ENCODE measurements at regions of chr7 and their contacts with region 1.

Region 1: DNA sequence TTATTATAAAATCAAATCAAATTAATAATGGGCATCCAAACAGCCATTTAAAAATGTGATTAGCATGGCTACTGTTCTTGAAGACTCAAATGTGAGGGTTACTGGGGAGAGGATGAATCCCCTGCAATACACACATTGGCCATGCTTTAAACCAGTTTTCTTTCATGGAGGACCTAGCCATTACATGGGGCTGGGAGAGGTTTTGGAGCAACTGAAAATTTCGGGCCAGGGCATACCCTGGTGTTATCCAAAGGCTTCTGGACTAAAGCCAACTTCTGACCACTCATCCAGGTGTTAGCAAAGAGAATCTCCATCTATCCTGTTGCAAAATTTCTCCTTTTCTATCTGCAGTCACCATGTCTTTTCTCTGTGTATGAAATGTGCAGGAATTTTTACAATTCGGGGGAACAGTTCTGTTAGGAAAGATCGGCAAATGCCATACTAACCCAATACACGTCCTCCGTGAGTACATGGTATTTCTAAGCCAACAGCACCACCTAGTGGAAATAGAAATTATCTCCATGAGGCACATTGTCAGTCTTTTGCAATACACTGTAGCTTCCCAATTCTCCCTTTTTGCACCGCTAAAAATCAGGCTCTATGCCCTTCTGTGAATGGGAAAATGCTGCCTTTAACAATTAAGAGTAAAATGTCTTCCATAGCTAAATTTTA is 47.0 kb upstream of the ZNF107 start:
- DNase-seq: no peak
- ATAC-seq: peak; percentile 72

Region 2: GRCh38 chr7:63008366-63008765 is 1610.6 kb before region 1 on chr7:
- intact Hi-C with region 1: loop called (anchors 5 kb)
- DNase-seq: no peak
- ATAC-seq: no peak

Region 3: GRCh38 chr7:64183126-64183742 is 435.7 kb before region 1 on chr7:
- intact Hi-C with region 1: loop called (anchors 2 kb)
- DNase-seq: no peak
- ATAC-seq: peak; percentile 26